A549 (cell line): ENCODE measurements at regions of chr1 and their contacts with region 1.

Region 1: DNA sequence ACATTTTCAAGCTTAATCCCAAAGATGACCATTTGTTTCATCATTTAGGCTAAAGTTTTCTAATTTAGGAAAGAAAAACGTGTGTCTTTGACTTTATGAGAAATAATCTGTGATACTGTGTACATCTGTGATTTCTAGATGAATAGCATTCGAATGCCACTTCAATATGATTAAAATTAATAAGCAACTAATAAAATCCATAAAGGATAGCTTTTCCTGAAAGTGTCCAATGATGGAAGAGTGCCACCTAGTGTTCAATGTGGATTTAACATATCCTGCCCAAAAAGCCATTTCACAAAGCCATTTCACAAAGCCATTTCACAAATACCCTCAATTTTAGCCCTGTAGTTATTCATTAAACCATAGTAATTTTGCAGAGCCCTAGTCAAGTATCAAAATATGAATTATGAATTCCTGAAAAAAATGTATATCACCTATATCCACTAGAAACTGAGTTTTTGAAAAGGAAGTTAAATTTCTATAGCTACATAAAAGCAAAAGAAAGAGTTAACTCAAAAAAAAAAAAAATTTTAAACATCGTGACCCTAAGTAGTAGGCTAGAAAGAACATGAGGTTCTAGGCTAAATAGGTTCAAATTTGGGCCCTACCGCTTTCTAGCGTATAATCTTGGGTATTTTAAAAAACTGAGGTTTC is 19.1 kb downstream of the NME7 start:
- DNase-seq: peak in 1 of 2 experiments; percentile 65
- ATAC-seq: peak in 1 of 2 experiments; percentile 68; a peak in 3 of 6 replicates
- H3K4me3 ChIP-seq: no peak overlapping the region
- H3K27ac ChIP-seq: peak overlapping the region in 1 of 2 experiments; percentile 23; a peak in 3 of 6 replicates
- H3K4me1 ChIP-seq: peaks cover 16% of the 10 kb centered on the region
- CTCF ChIP-seq: peak; percentile 91
- EP300 ChIP-seq: no peak
- POLR2A ChIP-seq: no peak
- RAD21 ChIP-seq: peak; percentile 97

Region 2: DNA sequence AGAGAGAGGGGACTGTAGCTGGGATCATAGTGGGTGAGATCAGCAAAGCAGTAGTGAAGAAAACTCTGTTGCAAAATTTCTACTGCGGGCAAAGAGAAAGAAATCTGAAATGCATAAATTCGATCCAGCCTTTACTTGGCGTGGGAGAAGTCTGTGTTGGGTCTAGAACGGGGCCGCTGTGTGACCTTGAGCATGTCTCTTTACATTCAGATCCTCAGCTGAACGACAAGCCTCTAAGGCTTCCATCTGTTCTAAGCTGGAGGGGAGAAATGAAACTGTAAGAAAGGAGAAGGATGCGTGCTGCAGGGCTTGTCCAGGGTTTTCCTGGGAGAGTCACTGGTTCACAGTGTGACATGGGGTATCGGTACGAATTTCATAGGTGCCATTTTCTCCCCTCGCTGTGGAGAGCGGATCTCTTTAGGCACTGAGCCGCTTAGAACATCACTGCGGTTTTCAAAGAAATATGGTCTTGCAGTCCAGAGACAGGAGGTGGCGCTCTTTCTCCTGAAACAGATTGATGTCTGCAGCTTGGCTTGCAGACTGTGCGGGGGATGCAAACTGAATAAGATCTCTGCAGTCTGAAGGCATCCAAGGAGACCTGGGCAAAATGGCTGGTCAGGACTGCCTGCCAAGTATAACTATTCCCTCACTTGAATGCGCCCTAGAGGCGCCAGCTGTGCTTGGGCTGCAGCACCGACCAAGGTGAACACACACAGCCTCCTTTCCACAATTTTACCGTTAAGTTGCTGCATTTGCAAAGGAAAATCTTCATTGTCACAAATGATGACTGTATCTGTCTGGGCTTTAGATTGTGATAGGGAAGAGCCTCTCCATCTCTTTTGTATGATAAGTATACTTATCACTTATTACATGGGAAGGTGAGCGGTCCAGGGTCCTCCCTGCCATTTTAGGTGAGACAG is 908.8 kb before region 1 on chr1:
- CTCF ChIA-PET with region 1: interaction called, 37 read pairs
- POLR2A ChIA-PET with region 1: no interaction called
- DNase-seq: peak; percentile 60 to 86
- ATAC-seq: peak; percentile 95 to 99
- H3K4me3 ChIP-seq: no peak overlapping the region
- H3K27ac ChIP-seq: peak overlapping the region; percentile 10 to 61; a peak in 3 of 6 replicates
- H3K4me1 ChIP-seq: no peaks in the 10 kb centered on the region
- CTCF ChIP-seq: peak; percentile 92
- EP300 ChIP-seq: no peak
- POLR2A ChIP-seq: no peak
- RAD21 ChIP-seq: peak; percentile 96

Region 3: GRCh38 chr1:168613691-168614231 is 734.7 kb before region 1 on chr1:
- CTCF ChIA-PET with region 1: interaction called, 157 read pairs
- POLR2A ChIA-PET with region 1: interaction called, 3 read pairs
- DNase-seq: no peak
- ATAC-seq: no peak
- H3K4me3 ChIP-seq: no peak overlapping the region
- H3K27ac ChIP-seq: no peak overlapping the region
- H3K4me1 ChIP-seq: no peaks in the 10 kb centered on the region
- CTCF ChIP-seq: no peak
- EP300 ChIP-seq: no peak
- POLR2A ChIP-seq: no peak
- RAD21 ChIP-seq: no peak

Region 4: GRCh38 chr1:169106095-169106920 is 242.2 kb before region 1 on chr1 and contains the start of gene ATP1B1:
- CTCF ChIA-PET with region 1: interaction called, 20 read pairs
- POLR2A ChIA-PET with region 1: interaction called, 5 read pairs
- DNase-seq: peak; percentile 90 to 91
- ATAC-seq: peak; percentile 63 to 83
- H3K4me3 ChIP-seq: peak within 1 kb of the TSS; percentile 92
- H3K27ac ChIP-seq: peak within 1 kb of the TSS; percentile 96 to 98
- H3K4me1 ChIP-seq: peaks cover 43% of the 10 kb centered on the region
- CTCF ChIP-seq: no peak
- EP300 ChIP-seq: no peak
- POLR2A ChIP-seq: peak; percentile 97
- RAD21 ChIP-seq: peak; percentile 10 to 50; a peak in 3 of 5 replicates
- polyA plus RNA-seq, gene ATP1B1: 323 and 377 TPM in 2 replicates

Region 5: DNA sequence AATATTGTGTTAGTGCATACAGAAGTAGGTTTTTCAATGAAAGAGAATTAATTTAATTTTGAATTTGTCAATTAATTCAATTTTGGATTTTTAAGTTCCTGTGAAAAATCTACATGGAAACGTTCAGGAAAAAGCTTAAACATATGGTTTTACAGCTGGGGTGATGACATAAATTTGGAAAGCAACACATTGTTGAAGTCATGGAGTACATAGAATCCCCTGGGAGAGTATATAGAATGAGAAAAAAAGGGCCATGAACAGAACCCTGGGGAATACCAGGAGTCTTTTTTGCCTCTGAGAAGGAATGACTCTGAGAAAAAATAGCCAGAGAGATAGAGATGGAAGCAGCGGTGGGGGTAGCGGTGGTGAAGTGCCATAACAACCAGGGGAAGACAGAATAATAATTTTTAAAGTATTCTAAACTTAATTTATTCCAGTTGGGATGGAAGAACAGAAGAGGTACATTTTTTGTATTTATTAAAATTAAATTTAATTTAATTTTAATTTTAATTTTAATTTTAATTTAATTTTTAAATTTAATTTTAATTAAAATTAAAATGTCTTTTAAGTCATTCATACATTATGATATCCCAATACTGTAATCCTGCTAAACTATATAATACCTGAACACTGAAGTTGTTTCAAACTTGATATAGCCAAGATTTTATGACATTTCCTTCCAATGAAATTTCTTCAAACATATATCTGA is 29.8 kb before region 1 on chr1:
- CTCF ChIA-PET with region 1: no interaction called
- POLR2A ChIA-PET with region 1: no interaction called
- DNase-seq: no peak
- ATAC-seq: no peak
- H3K4me3 ChIP-seq: no peak overlapping the region
- H3K27ac ChIP-seq: no peak overlapping the region
- H3K4me1 ChIP-seq: peaks cover 10% of the 10 kb centered on the region
- CTCF ChIP-seq: no peak
- EP300 ChIP-seq: no peak
- POLR2A ChIP-seq: no peak
- RAD21 ChIP-seq: no peak

Region 6: DNA sequence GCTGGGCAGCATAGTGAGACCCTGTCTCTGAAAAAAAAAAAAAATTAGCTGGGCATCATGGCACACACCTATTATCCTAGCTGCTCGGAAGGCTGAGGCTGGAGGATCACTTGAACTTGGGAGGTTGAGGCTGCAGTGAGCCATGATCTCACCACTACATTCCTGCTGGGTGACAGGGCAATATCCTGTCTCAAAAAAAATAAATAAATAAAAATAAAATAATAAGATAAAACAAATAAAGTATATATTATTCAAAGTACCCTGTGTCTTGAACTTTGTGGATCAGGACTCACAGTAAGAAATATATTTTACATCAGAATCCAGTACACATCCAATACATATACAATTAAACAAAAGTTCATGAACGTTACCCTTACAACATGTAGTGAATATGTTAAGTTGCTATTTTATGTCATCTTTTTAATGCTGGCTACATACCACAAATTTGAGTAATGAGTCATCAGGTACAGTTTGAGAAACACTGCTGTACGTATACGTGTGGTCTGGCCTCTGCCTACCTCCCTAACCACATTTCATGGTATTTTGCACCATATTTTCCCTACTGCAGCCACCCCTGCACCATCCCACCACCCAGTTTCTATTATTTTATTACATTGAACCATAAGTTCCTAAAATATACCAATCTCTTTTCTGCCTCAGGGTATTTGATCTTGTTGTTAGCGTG is 14.7 kb after region 1 on chr1:
- CTCF ChIA-PET with region 1: interaction called, 19 read pairs
- POLR2A ChIA-PET with region 1: no interaction called
- DNase-seq: no peak
- ATAC-seq: no peak
- H3K4me3 ChIP-seq: no peak overlapping the region
- H3K27ac ChIP-seq: 0 out of 6 replicates have a peak overlapping the region, but pooled peaks of 1 of the 2 experiments have one; percentile 7
- H3K4me1 ChIP-seq: peaks cover 9% of the 10 kb centered on the region; the same call in 1 of the 3 replicates
- CTCF ChIP-seq: no peak
- EP300 ChIP-seq: no peak
- POLR2A ChIP-seq: no peak
- RAD21 ChIP-seq: no peak